Activated CD4-positive, alpha-beta T cell treated with anti-CD3 and anti-CD28 coated beads, Interleukin-2, amount 10 ng/mL, durations not matched to agents 24 days and 14 days (primary cell): ENCODE measurements at regions of chr6 and their contacts with region 1.

Region 1: DNA sequence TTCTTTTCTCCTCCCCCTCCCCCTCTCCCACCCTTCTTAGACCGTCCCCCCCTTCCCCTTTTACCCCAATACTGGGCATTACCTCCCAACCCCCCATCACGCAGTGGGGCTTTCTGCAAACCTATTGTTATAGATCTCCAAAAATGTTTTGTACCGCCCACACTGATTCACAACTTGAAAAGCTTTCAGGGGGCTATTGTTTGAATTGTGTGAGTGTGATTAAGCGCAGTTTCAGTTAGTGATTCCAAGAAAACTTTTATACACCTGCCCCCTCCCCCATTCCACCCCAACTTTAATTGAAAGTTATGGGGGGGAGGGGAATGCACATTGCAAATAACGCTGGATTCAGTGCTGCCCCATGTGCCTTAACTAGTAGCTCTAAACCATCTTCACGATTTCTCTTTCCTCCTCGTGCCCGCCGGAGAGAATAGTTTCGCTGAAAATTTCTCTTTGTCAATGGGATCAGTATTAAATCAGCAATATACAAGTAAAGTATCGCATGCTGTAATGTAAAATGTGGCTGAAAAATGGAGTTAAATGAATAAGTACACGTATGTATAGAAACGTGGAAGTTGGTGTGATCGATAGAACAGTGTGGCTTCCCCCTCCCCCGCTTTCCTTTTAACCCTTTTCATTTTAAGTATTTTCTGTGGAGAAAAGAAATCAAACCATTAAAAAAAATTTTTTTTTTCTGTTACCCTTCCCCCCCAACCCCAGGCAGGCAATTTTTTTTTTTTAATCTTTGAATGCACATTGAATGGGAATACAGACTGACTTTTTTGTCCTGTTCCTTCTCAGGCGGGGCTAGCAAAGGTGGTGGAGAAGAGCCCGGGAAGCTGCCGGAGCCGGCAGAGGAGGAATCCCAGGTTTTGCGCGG is 632 bp downstream of the LIN28B start:
- DNase-seq: no peak
- H3K4me3 Mint-ChIP-seq: peak overlapping the region; percentile 68
- H3K27ac Mint-ChIP-seq: no peak overlapping the region
- H3K4me1 Mint-ChIP-seq: peaks cover 14% of the 10 kb centered on the region
- H3K27me3 Mint-ChIP-seq: peaks cover 61% of the 10 kb centered on the region

Region 2: DNA sequence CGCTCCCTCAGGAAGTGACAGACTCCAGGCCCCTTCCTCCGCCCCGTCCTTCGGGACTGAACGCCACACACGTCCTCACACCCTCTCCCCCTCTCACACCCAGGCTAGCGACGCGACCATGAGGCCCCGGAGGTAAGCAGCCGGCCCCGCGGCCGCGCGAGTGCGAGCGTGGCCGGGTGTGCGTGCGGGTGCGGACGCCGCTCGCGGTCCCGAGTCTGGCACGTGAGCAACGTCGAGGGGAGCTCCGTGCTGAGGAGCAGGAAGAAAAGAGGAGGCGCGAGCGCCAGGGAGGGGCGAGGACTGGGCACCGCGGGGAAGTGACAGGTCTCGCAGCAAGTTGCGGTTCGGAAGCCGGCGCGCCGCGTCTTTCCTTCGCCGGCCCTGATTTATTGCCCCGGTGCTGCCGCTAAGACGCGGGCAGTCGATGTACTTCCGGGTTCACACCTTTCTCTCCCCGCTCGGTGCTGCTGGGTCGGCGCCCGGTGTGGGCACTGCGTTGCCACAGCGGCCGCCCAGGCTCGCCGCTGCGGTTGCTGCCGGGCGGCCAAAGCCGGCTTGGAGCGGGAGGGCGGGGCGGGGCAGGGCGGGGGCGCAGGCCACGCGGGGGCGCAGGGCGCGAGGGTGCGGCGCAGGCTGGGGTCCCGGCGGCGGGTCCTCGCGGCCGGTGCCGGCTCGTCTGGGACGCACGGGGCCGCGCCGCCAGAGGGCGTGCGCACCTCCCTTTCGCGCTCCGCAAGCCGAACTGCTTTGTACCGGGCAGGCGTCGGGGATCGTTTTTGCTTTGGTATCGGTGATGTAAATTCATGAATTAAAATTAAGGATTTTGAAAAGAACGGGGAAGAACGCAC is 16.4 kb before region 1 on chr6:
- intact Hi-C with region 1: loop called (anchors 2 kb)
- DNase-seq: peak; percentile 80
- H3K4me3 Mint-ChIP-seq: peak overlapping the region; percentile 79
- H3K27ac Mint-ChIP-seq: no peak overlapping the region
- H3K4me1 Mint-ChIP-seq: peaks cover 2% of the 10 kb centered on the region
- H3K27me3 Mint-ChIP-seq: peaks cover 42% of the 10 kb centered on the region

Region 3: DNA sequence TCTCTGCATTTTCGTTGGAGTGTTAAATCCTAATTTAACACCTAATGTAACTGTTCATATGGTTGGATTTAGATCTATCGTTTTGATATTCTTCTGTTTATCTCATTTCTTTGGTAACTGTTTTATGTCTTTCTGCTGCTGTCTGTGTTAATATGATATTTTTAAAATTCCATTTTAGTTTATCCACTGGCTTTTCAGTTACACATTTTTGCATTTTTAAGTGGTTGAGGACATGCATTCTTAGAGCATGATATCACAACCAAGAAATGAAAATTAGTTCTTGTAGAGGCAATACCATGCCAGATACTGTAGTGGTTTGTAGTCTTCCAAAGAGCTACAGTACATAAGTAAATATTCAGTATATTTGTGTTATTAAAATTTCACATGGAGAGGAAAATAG is 57.9 kb after region 1 on chr6:
- intact Hi-C with region 1: no loop called
- DNase-seq: no peak
- H3K4me3 Mint-ChIP-seq: no peak overlapping the region
- H3K27ac Mint-ChIP-seq: no peak overlapping the region
- H3K4me1 Mint-ChIP-seq: no peaks in the 10 kb centered on the region
- H3K27me3 Mint-ChIP-seq: peaks cover 5% of the 10 kb centered on the region